Ovary (tissue), 10 donors: ENCODE measurements at regions of chrX and their contacts with region 1.

Region 1: DNA sequence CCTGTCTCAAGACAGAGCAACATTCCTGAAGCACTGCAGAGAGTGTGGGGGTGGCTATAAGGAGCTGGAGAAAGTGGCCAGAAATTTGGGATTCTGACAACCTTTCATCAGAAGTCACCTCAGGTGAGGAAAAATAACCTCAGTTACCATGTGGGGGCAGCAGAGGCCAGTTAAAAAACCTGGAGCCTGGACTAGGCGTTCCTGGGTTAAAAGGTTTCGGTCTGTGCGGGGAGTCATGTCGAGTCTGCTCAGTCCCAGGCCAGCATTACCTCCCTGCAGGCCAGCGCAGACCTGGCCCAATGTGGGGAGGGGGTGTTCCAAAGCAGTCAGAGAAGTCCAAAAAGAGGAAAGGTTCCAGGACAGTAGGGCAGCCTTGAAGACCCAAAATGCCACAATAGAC is 10.9 kb upstream of the NALF2 start:
- DNase-seq: no peak
- H3K4me3 ChIP-seq: no peak overlapping the region
- H3K27ac ChIP-seq: no peak overlapping the region
- H3K4me1 ChIP-seq: no peaks in the 10 kb centered on the region
- H3K27me3 ChIP-seq: no peaks in the 10 kb centered on the region
- CTCF ChIP-seq: no peak
- EP300 ChIP-seq: no peak
- POLR2A ChIP-seq: no peak

Region 2: DNA sequence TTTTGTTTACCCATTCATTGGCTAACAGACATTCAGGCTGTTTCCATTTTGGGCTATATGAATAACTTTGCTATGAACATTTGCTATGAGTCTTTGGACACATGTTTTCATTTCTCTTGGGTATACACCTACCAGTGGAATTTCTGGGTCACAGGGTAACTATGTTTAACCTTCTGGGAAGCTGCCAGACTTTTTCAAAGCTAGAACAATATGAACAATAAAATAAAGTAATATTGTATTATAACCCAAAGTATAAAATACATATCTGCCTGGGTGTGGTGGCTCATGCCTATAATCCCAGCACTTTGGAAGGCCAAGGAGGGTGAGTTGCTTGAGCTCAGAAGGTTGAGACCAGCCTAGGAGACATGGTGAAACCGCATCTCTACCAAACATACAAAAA is 1042.0 kb after region 1 on chrX:
- intact Hi-C with region 1: loop called in 1 of 4 experiments (anchors 10 kb)
- DNase-seq: no peak
- H3K4me3 ChIP-seq: no peak overlapping the region
- H3K27ac ChIP-seq: no peak overlapping the region
- H3K4me1 ChIP-seq: no peaks in the 10 kb centered on the region
- H3K27me3 ChIP-seq: no peaks in the 10 kb centered on the region
- CTCF ChIP-seq: no peak
- EP300 ChIP-seq: no peak
- POLR2A ChIP-seq: no peak